Activated CD4-positive, alpha-beta T cell treated with anti-CD3 and anti-CD28 coated beads for 36 hours (primary cell): ENCODE measurements at regions of chr5 and their contacts with region 1.

Region 1: DNA sequence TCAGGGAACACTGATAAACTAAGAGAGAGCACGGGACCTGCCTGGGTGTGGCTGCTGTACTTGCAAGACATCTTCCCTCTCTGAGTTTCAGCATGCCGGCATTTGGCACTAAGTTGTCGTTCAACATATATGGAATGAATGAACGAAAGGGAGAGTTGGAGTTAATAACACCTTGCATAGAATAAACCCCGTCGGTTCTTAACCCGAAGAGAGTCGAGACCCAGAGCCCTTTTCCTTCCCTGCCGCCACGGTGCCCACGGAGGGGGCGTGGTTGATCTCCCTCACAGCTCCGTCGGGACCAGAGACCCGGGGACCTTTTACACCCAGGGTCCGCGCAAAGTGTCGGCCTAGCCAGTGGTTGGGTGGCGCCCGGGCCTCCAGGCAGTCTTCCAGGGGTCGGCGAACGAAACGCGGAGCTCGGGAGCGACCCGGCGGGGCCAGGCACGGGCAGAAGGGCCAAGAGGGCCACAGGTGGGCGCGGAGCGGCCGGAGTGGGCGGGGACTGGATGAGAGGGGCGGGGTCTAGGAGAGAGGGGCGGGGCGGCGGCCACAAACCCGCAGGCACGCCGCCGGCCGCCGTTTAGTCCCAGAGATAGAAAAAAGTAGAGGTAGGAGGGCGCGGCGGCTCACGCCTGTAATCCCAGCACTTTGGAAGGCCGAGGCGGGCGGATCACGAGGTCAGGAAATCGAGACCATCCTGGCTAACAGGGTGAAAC is 735 bp upstream of the RPL26L1 start:
- DNase-seq: peak; percentile 83
- ATAC-seq: peak; percentile 76
- H3K4me3 Mint-ChIP-seq: peak overlapping the region; percentile 93
- H3K27ac Mint-ChIP-seq: peak overlapping the region; percentile 94
- H3K4me1 Mint-ChIP-seq: peaks cover 17% of the 10 kb centered on the region
- H3K27me3 Mint-ChIP-seq: no peaks in the 10 kb centered on the region

Region 2: DNA sequence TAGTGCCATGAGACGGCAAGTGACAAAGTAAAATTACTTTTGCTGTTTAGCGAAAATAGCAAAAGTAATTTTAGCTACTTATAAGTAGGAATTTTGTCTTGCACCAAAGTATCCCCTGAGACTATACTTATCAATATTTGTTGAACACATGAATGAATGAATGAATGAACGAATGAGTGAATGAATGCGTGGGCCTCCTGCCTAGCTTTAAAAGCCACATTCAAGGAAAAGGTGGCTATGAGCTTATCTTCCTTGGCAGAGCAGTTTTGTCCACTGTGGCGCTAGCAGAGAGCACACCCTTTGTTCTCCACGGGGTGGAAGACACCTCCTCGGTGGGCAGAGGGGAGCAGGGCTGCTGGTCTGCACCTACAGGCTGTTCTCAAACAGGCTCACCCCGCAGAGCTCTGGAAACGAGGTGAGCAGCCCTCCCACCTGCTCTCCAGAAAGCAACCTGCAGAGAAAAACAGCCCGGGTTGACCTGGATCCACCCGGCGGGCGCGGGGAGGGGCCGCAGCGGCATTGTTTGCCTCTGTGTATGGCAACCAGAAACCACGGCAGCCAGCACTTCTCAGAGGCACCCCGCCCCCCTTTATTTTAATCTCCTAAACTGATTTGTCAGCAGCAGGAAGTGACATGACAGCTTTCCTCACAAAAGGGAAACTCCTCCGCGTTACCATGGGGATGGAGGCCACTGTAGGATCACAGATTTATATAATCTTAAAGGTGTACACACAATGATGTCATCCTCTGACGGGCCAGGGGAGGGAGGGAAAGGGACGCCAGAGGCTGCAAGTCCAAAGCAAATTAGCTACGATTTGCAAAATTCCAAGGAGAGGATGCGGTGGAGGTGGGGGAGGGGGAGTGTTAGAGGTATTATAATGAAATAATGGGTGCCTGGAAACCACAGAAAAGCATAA is 193.4 kb before region 1 on chr5:
- CTCF ChIA-PET with region 1: no interaction called
- POLR2A ChIA-PET with region 1: no interaction called
- intact Hi-C with region 1: loop called (anchors 1 to 2 kb)
- DNase-seq: peak; percentile 96
- ATAC-seq: peak; percentile 93
- H3K4me3 Mint-ChIP-seq: peak overlapping the region; percentile 72
- H3K27ac Mint-ChIP-seq: peak overlapping the region; percentile 91
- H3K4me1 Mint-ChIP-seq: peaks cover 45% of the 10 kb centered on the region
- H3K27me3 Mint-ChIP-seq: no peaks in the 10 kb centered on the region

Region 3: DNA sequence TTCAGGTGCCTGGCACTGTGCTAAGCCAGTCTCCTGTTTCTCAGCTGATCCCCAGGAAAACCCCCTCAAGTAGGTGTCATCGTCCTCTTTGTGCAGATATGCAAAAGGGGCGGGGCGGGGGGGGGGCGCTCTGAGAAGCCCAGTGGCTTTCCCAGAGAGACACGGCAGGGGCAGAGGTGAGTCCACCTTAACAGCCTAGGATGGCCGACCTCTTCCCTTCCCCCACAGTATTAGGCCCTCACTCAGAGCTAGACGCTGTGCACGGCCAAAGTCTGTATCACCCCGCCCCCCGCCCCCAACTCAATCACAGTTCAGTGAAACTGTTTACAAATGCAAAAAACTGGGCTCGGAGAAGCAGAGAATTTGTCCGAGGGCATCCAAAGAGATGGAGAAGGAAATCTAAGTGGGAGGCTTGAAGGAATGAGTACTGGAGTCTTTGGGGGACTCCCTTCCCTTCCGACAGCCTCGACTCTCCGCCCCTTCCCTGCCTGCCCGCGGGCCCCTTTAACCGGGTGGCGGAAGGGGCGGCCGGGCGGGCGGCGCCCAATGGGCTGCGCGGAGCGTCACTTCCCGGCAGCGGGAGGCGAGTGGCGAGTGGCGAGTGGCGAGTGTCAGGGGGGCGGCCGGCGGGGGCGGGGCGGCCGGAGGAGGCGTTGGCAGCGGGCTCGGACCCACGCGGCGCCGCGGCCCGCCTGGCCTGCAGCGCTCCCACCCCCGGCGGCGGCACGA is 124.6 kb before region 1 on chr5 and contains the start of gene ERGIC1:
- CTCF ChIA-PET with region 1: no interaction called
- POLR2A ChIA-PET with region 1: interaction called, 7 read pairs
- intact Hi-C with region 1: loop called in 1 of 2 experiments (anchors 1 kb)
- DNase-seq: peak; percentile 79
- ATAC-seq: peak; percentile 77
- H3K4me3 Mint-ChIP-seq: peak within 1 kb of the TSS; percentile 79
- H3K27ac Mint-ChIP-seq: peak within 1 kb of the TSS; percentile 84
- H3K4me1 Mint-ChIP-seq: peaks cover 42% of the 10 kb centered on the region
- H3K27me3 Mint-ChIP-seq: no peaks in the 10 kb centered on the region
- total RNA-seq, gene ERGIC1: 40.3 to 50.0 TPM

Region 4: DNA sequence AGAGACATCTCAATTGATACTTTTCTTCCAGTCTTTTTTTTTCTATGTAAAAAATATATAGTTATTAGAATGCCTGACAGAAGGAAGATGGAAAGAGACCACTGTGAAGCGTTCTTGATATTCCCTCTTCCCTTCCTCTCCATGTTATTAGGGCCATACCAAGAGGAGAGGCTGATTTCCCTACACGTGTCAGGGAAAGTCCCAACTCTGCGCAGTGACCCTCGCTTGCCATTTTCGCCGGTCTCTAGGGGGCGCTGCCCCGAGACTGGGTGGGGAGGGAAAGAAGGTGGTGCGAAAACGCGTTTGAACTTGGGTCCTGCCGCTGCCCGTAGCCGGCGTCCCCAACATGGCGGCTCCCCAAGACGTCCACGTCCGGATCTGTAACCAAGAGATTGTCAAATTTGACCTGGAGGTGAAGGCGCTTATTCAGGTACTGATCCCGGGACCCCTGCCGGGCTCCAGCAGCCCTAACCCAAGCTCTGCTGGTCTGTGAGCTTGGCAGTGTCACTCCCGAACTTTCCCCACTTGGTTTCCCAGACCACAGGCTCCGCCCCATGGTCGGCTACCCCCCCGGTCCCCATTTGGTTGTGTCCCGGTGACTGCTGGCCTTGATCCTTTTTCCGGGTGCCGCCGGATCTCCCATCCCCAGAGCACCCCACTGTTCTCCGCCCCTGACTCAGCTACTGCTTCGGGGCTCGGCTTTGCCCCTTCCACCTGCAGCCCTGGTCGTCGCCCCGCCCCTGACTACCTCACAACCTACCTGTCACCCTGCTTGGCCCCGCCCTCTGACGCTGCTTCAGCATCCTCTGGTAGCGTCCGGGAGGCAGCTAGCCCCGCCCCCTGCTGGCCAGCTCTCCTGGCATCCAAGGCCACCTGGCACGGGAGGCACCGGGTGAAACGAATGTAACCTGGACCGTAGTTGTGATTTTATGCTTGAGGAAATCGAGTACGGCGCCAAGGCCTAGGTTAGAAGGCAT is 186.0 kb after region 1 on chr5 and contains the start of gene BNIP1:
- CTCF ChIA-PET with region 1: interaction called, 3 read pairs
- POLR2A ChIA-PET with region 1: no interaction called
- intact Hi-C with region 1: loop called in 1 of 2 experiments (anchors 1 kb)
- DNase-seq: peak; percentile 98
- ATAC-seq: peak; percentile 94
- H3K4me3 Mint-ChIP-seq: peak within 1 kb of the TSS; percentile 99
- H3K27ac Mint-ChIP-seq: peak within 1 kb of the TSS; percentile 99
- H3K4me1 Mint-ChIP-seq: peaks cover 10% of the 10 kb centered on the region
- H3K27me3 Mint-ChIP-seq: no peaks in the 10 kb centered on the region
- total RNA-seq, gene BNIP1: 24.2 to 26.8 TPM

Region 5: DNA sequence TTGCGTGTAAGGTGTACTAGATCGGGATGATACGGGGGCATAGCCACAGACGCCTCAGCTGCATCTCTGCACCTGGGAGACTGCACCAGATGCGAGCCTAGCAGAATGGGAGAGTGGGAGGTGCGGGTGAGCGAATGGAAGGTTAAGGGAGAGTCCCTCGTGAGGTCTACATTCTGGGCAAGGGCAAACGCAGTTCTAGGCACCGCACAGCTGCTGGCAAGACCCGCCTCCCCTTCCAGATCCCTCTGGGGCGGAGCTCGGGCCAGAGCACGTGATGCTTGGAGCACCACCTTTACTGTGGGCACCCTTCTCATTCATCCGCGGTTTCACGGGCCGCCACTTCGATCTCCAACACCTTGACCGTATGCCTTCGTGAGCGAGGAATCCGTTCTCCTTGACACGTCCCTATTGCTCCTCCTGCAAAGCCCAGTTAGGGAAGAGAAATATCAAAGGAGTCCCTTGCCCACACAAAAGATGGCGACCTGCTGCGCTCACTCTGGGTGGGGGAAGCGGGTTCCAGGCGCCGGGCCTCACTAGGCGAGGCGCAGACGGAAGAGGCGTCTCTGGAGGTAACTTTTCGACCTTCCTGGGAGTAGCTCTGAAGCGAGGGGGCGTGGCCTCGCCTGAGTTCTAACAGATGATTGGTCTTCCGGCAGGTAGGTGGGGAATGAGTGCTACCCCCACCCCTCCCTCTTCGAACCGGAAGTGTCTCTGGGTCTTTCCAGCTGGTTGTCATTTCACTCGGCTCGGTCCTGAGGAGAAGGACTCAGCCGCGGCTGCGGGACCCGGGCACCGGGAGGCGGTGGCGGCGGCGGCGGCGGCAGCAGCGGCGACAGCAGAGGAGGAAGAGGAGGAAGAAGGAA is 929.4 kb after region 1 on chr5 and contains the start of gene CPEB4:
- CTCF ChIA-PET with region 1: no interaction called
- POLR2A ChIA-PET with region 1: no interaction called
- intact Hi-C with region 1: loop called in 1 of 2 experiments (anchors 1 kb)
- DNase-seq: peak; percentile 98
- ATAC-seq: peak; percentile 96
- H3K4me3 Mint-ChIP-seq: peak within 1 kb of the TSS; percentile 96
- H3K27ac Mint-ChIP-seq: peak within 1 kb of the TSS; percentile 98
- H3K4me1 Mint-ChIP-seq: peaks cover 67% of the 10 kb centered on the region
- H3K27me3 Mint-ChIP-seq: no peaks in the 10 kb centered on the region
- total RNA-seq, gene CPEB4: 5.6 to 8.3 TPM